H1 (cell line): ENCODE measurements at regions of chr4 and their contacts with region 1.

Region 1: DNA sequence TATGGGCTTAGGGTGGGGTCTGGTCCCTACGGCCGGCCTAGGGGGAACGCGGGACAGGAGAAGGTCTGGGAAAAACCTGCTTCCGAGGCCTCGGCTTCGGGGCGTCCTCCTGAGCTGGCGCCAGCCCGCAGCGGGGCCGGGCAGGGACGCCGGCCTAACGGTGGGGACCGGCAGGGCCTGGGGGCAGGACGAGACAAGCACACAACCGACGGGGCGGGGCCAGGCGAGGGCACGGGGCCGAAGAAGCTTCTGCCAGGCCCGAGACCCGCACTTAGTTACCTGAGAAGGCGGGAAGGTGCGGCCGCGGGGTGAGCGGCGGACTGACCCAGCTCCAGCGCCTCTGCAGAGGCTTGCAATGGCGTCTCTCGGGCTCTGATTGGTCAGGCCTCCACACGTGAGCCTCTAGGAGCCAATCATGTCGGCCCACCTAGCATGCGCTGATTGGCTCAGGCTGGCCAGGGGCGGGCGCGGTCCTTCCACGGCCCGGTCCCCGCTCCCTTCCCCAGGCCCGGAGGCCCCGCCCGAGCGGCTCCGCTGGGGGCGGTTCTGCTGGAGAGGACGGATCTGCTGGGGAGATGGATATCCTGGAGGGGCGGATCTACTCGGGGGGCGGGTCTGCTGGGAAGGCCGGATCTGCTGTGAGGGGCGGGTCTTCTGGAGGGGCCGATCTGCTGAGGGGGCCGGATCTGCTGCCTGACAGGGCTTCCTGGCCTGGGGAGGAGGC is 44.3 kb downstream of the CPLX1 start:
- DNase-seq: peak; percentile 98
- H3K4me3 ChIP-seq: peak overlapping the region; percentile 77 to 92 (median 91)
- H3K27ac ChIP-seq: peak overlapping the region; percentile 94
- H3K4me1 ChIP-seq: peaks cover 0 to 21% (median 18%) of the 10 kb centered on the region in 4 experiments; a peak in 6 of 7 replicates
- H3K27me3 ChIP-seq: peaks cover 27 to 38% (median 38%) of the 10 kb centered on the region in 4 experiments
- CTCF ChIP-seq: no peak
- EP300 ChIP-seq: no peak
- POLR2A ChIP-seq: peak in 1 of 2 experiments; percentile 97; a peak in 2 of 3 replicates
- RAD21 ChIP-seq: no peak

Region 2: DNA sequence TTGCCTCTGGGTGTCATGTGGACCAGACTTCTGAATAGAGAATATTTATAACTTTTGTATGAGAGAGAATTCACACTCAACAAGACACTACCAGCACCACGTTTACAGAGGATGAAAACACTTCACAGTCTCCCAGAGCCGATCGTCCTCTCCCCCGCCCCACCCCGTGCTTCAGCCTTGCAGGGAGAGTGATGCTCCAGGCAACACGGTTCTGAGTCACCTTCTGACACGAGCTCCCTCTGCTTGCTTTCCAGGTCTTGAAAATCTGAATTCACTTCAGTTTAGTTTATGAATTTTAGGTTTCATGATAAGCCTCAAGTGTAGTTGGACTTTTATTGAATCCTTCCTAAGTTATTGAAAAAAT is 15.5 kb before region 1 on chr4:
- CTCF ChIA-PET with region 1: no interaction called
- POLR2A ChIA-PET with region 1: interaction called, 13 read pairs
- DNase-seq: no peak
- H3K4me3 ChIP-seq: no peak overlapping the region
- H3K27ac ChIP-seq: no peak overlapping the region
- H3K4me1 ChIP-seq: no peaks in the 10 kb centered on the region
- H3K27me3 ChIP-seq: no peaks in the 10 kb centered on the region
- CTCF ChIP-seq: no peak
- EP300 ChIP-seq: no peak
- POLR2A ChIP-seq: no peak
- RAD21 ChIP-seq: no peak

Region 3: GRCh38 chr4:997375-998071 is 215.9 kb after region 1 on chr4:
- CTCF ChIA-PET with region 1: no interaction called
- POLR2A ChIA-PET with region 1: no interaction called
- DNase-seq: no peak
- H3K4me3 ChIP-seq: peak overlapping the region; percentile 15 to 60 (median 30); a peak in 6 of 8 replicates
- H3K27ac ChIP-seq: no peak overlapping the region
- H3K4me1 ChIP-seq: peaks cover 0 to 6% (median 3%) of the 10 kb centered on the region in 4 experiments; a peak in 5 of 7 replicates
- H3K27me3 ChIP-seq: peaks cover 39 to 66% (median 63%) of the 10 kb centered on the region in 4 experiments
- CTCF ChIP-seq: no peak
- EP300 ChIP-seq: no peak
- POLR2A ChIP-seq: no peak
- RAD21 ChIP-seq: no peak

Region 4: GRCh38 chr4:1055721-1056590 is 274.3 kb after region 1 on chr4:
- CTCF ChIA-PET with region 1: no interaction called
- POLR2A ChIA-PET with region 1: no interaction called
- DNase-seq: no peak
- H3K4me3 ChIP-seq: peak overlapping the region in 1 of 4 experiments; percentile 5; a peak in 1 of 8 replicates
- H3K27ac ChIP-seq: no peak overlapping the region
- H3K4me1 ChIP-seq: peaks cover 0 to 7% (median 4%) of the 10 kb centered on the region in 4 experiments; a peak in 2 of 7 replicates
- H3K27me3 ChIP-seq: peaks cover 0 to 20% (median 14%) of the 10 kb centered on the region in 4 experiments; a peak in 6 of 7 replicates
- CTCF ChIP-seq: no peak
- EP300 ChIP-seq: no peak
- POLR2A ChIP-seq: no peak
- RAD21 ChIP-seq: no peak

Region 5: GRCh38 chr4:1167247-1167949 is 385.7 kb after region 1 on chr4:
- CTCF ChIA-PET with region 1: no interaction called
- POLR2A ChIA-PET with region 1: no interaction called
- DNase-seq: peak; percentile 75 to 90
- H3K4me3 ChIP-seq: peak overlapping the region; percentile 30 to 75 (median 60)
- H3K27ac ChIP-seq: no peak overlapping the region
- H3K4me1 ChIP-seq: peaks cover 0 to 12% (median 4%) of the 10 kb centered on the region in 4 experiments; a peak in 4 of 7 replicates
- H3K27me3 ChIP-seq: peaks cover 40 to 53% (median 50%) of the 10 kb centered on the region in 4 experiments
- CTCF ChIP-seq: peak in 2 of 3 experiments; percentile 81 to 87; a peak in 3 of 4 replicates
- EP300 ChIP-seq: no peak
- POLR2A ChIP-seq: peak in 1 of 2 experiments; percentile 28; a peak in 2 of 3 replicates
- RAD21 ChIP-seq: peak; percentile 64 to 70